ENCODE measurements at regions of chr15 and their contacts with region 1.

Region 1: GRCh38 chr15:44676676-44677075 is 13.2 kb upstream of the SPG11 start:
- DNase-seq: no peak
- ATAC-seq: peak in 1 of 2 donors; percentile 23
- H3K4me3 Mint-ChIP-seq: peak overlapping the region; percentile 61 to 88 (median 82)
- H3K27ac Mint-ChIP-seq: peak overlapping the region; percentile 91 to 99 (median 95)
- H3K4me1 Mint-ChIP-seq: peaks cover 55 to 91% (median 89%) of the 10 kb centered on the region in 4 donors
- H3K27me3 Mint-ChIP-seq: no peaks in the 10 kb centered on the region

Region 2: DNA sequence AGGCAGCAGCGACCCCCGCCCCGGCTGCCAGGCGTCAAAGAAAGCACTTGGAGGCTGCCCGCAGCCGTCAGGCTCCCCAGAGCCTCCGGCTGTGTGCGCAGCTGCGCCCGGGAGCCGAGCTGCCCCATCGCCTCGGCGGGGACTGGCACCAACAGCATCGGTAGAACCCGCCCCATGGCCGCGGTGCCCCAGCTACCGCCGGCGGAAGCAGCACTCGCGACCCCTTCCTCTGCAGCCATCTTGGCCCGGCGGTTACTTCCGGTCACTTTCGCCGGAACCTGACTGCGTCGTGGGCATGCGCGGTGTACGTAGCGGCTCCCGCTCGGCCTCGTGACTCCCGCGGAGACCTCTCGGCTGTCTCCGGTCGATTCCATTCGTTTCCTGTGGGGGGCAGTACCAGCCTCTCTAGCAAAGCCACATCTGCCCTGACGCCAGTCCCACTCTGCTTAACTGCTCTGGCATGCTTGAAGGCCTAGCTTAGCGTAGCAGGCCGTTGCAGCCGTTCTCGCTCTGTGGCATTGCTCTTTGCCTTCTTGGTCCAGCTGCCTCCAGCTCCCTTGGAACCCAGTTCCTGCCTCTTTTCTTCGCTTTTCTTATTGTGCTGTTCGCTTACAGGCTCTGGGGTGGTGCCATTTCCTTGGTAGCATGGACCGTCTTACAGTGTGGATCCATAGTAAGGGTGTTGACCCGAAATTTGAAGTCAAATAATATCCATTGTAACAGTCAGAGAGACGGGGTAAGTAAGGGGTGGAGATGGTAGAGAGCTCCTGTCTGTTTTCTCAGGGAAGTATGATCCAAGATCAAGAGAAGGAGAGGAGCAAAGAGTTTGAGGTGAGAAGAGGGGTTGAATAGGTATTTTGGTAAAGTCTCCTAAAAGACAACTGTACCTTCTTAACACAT is 13.0 kb before region 1 on chr15 and contains the start of gene SPG11:
- POLR2A ChIA-PET with region 1: interaction called, 611 read pairs
- DNase-seq: peak; percentile 84 to 99 (median 94)
- ATAC-seq: peak; percentile 76 to 79
- H3K4me3 Mint-ChIP-seq: peak within 1 kb of the TSS; percentile 92 to 99 (median 98)
- H3K27ac Mint-ChIP-seq: peak within 1 kb of the TSS; percentile 95 to 100 (median 100)
- H3K4me1 Mint-ChIP-seq: peaks cover 30 to 81% (median 67%) of the 10 kb centered on the region in 4 donors
- H3K27me3 Mint-ChIP-seq: no peaks in the 10 kb centered on the region
- polyA plus RNA-seq, gene SPG11: 24.3 to 30.9 (median 29.8) TPM

Region 3: DNA sequence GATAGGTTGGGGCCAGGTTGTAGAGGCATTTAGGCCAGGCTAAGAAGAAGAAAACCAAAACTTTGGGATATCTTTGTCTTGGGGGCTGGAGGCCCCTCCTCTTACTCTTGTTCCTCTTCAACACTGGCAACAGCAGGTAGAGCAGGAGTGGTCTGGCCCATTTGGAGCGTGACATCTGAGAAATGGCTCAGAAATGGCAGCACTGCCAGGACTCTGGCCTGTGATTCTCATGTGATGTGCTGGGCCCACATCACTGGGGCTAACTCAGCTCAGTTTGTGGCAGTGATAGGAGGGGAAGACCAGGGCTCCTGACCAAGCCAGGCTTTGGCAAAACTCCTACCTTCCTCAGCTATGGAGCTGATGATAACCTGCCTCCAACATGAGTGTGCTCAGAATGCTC is 16.0 kb after region 1 on chr15:
- POLR2A ChIA-PET with region 1: interaction called, 611 read pairs
- DNase-seq: no peak
- ATAC-seq: no peak
- H3K4me3 Mint-ChIP-seq: no peak overlapping the region
- H3K27ac Mint-ChIP-seq: peak overlapping the region in 5 of 10 donors; percentile 19 to 73 (median 49)
- H3K4me1 Mint-ChIP-seq: peaks cover 18 to 60% (median 51%) of the 10 kb centered on the region in 4 donors
- H3K27me3 Mint-ChIP-seq: no peaks in the 10 kb centered on the region

Region 4: GRCh38 chr15:44698641-44699040 is 22.0 kb after region 1 on chr15:
- POLR2A ChIA-PET with region 1: interaction called, 1,569 read pairs
- DNase-seq: no peak
- ATAC-seq: no peak
- H3K4me3 Mint-ChIP-seq: no peak overlapping the region
- H3K27ac Mint-ChIP-seq: peak overlapping the region in 4 of 10 donors; percentile 30 to 45 (median 34)
- H3K4me1 Mint-ChIP-seq: peaks cover 17 to 34% (median 29%) of the 10 kb centered on the region in 4 donors
- H3K27me3 Mint-ChIP-seq: no peaks in the 10 kb centered on the region

Region 5: DNA sequence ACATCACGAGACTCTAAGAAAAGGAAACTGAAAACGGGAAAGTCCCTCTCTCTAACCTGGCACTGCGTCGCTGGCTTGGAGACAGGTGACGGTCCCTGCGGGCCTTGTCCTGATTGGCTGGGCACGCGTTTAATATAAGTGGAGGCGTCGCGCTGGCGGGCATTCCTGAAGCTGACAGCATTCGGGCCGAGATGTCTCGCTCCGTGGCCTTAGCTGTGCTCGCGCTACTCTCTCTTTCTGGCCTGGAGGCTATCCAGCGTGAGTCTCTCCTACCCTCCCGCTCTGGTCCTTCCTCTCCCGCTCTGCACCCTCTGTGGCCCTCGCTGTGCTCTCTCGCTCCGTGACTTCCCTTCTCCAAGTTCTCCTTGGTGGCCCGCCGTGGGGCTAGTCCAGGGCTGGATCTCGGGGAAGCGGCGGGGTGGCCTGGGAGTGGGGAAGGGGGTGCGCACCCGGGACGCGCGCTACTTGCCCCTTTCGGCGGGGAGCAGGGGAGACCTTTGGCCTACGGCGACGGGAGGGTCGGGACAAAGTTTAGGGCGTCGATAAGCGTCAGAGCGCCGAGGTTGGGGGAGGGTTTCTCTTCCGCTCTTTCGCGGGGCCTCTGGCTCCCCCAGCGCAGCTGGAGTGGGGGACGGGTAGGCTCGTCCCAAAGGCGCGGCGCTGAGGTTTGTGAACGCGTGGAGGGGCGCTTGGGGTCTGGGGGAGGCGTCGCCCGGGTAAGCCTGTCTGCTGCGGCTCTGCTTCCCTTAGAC is 34.9 kb after region 1 on chr15 and contains the start of gene B2M:
- POLR2A ChIA-PET with region 1: interaction called, 1,569 read pairs
- DNase-seq: peak; percentile 87 to 99 (median 96)
- ATAC-seq: peak; percentile 70 to 81
- H3K4me3 Mint-ChIP-seq: peak within 1 kb of the TSS; percentile 88 to 100 (median 98)
- H3K27ac Mint-ChIP-seq: peak within 1 kb of the TSS; percentile 100
- H3K4me1 Mint-ChIP-seq: peaks cover 33 to 69% (median 54%) of the 10 kb centered on the region in 4 donors
- H3K27me3 Mint-ChIP-seq: peaks cover 0 to 4% (median 0%) of the 10 kb centered on the region in 5 donors
- polyA plus RNA-seq, gene B2M: 25,152 to 39,550 (median 31,716) TPM

Region 6: GRCh38 chr15:44728576-44729407 is 52.1 kb after region 1 on chr15:
- POLR2A ChIA-PET with region 1: interaction called, 707 read pairs
- DNase-seq: peak; percentile 80 to 97 (median 96)
- ATAC-seq: peak; percentile 78 to 85
- H3K4me3 Mint-ChIP-seq: peak overlapping the region; percentile 97 to 100 (median 99)
- H3K27ac Mint-ChIP-seq: peak overlapping the region; percentile 98 to 100 (median 99)
- H3K4me1 Mint-ChIP-seq: peaks cover 29 to 83% (median 72%) of the 10 kb centered on the region in 4 donors
- H3K27me3 Mint-ChIP-seq: no peaks in the 10 kb centered on the region

Region 7: GRCh38 chr15:44738340-44738984 is 61.8 kb after region 1 on chr15:
- POLR2A ChIA-PET with region 1: interaction called, 618 read pairs
- DNase-seq: peak in 3 of 10 donors; percentile 65 to 72 (median 67)
- ATAC-seq: no peak
- H3K4me3 Mint-ChIP-seq: peak overlapping the region in 9 of 10 donors; percentile 40 to 77 (median 59)
- H3K27ac Mint-ChIP-seq: peak overlapping the region; percentile 28 to 100 (median 87)
- H3K4me1 Mint-ChIP-seq: peaks cover 20 to 60% (median 56%) of the 10 kb centered on the region in 4 donors
- H3K27me3 Mint-ChIP-seq: no peaks in the 10 kb centered on the region